ENCODE measurements at regions of chr12 and their contacts with region 1.

Region 1: GRCh38 chr12:38324896-38325295 is 8.3 kb downstream of the ALG10B start:
- DNase-seq: no peak

Region 2: DNA sequence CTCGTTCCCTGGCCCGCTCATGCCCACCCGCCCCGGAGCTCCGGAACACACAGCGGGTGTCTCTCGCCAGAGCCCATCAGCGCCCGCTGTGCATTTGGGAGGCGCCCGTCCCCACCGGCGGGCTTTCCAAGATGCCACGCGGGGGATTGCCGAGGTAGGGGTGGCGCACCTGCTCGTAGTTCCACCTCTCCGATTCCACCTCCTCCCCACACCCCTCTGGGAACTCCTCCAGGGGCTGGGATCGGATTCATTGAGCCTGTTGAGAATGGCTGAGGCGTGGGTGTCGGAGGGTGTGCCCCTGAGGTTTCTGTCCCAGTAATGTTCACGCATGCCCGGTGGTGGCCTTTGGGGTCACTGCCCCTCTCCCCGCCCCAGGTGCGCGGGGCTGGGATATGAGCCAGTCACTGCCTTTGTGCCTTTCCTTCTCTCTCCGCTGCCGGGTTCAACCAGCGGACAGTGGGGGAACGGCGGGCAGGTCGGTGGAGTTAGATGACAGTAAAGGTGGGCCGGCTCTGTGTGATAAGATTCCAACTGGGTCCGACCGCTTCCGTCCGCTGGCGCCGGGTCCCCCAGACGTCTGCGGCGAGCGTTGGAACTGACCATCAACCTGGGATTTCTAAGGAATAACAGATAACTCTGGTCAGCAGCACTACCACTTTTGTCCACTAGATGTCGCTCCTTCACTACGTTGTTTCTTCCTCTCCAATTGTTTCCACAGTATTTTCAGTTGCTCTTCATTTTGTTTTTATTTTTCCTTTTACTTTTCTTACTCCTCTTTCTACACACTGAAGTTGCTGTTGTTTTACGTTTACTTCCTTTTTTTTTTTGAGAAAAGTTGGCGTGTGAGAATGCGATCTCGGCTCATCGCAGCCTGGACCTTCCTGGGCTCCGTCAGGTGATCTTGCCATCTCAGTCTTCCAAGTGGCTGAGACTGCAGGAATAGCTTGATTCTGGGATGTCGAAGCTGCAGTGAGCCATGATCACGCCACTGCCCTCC is 186.4 kb before region 1 on chr12:
- intact Hi-C with region 1: no loop called
- DNase-seq: no peak

Region 3: GRCh38 chr12:38399711-38400206 is 74.9 kb after region 1 on chr12:
- intact Hi-C with region 1: no loop called
- DNase-seq: no peak

Region 4: GRCh38 chr12:39272871-39273770 is 948.2 kb after region 1 on chr12:
- intact Hi-C with region 1: loop called in 1 of 2 experiments (anchors 10 kb)
- DNase-seq: no peak